B cell (primary cell): ENCODE measurements at regions of chr17 and their contacts with region 1.

Region 1: GRCh38 chr17:8997994-8998628 is 23.2 kb upstream of the NTN1 start:
- DNase-seq: peak; percentile 85
- ATAC-seq: peak; percentile 79
- H3K4me3 ChIP-seq: no peak overlapping the region
- H3K4me3 Mint-ChIP-seq: no peak overlapping the region
- H3K27ac ChIP-seq: no peak overlapping the region
- H3K27ac Mint-ChIP-seq: no peak overlapping the region
- H3K4me1 ChIP-seq: peaks cover 17 to 18% of the 10 kb centered on the region in 2 donors
- H3K4me1 Mint-ChIP-seq: peaks cover 22% of the 10 kb centered on the region
- H3K27me3 ChIP-seq: peaks cover 0 to 17% (median 9%) of the 10 kb centered on the region in 4 experiments
- H3K27me3 Mint-ChIP-seq: peaks cover 15% of the 10 kb centered on the region
- CTCF ChIP-seq: peak; percentile 99

Region 2: DNA sequence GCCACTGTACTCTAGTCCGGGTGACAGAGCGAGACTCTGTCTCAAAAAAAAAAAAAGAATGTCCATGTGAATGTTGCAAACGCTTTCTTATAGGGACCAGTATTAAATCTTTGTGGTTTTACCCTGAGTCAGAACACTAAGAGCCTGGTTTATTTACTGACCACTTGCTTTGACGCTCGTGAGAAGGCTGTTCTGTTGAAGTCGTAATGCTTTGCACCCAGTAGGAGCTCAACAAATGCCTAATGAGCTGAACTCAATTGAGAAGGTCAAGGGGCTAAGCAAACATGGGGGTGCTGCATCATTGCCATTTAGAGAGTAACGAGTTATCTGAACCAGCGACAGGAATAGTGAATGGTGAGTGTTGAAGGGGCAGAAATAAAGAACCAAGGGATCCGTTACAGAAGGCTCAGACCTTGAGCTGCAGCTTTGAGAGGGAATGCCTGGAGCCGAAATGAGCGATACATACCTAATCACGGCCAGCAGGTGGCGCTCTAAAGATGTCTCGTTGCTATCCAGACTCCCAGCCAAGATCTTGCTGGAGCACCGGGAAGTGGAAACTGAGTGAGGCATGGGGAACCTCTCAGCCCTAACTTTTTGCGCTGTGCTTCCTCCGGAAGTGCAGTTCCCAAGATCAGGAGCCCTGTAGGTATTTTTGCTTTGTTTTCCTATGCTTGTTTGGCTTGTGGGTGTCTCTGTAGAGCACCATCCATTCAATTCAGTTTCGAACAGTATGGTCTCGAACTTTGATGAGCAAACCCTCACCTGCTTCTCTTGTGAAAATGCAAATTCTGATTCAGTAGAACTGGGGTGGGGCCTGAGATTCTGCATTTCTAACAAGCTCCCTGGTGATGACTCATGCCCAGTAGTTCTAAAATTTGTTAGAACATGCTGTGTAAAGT is 587.9 kb before region 1 on chr17:
- CTCF ChIA-PET with region 1: interaction called, 19 read pairs
- POLR2A ChIA-PET with region 1: no interaction called
- intact Hi-C with region 1: no loop called
- DNase-seq: peak; percentile 85
- ATAC-seq: peak; percentile 76
- H3K4me3 ChIP-seq: no peak overlapping the region
- H3K4me3 Mint-ChIP-seq: no peak overlapping the region
- H3K27ac ChIP-seq: no peak overlapping the region
- H3K27ac Mint-ChIP-seq: peak overlapping the region; percentile 50
- H3K4me1 ChIP-seq: peaks cover 0 to 5% of the 10 kb centered on the region in 2 donors
- H3K4me1 Mint-ChIP-seq: peaks cover 4% of the 10 kb centered on the region
- H3K27me3 ChIP-seq: peaks cover 0 to 19% (median 4%) of the 10 kb centered on the region in 4 experiments
- H3K27me3 Mint-ChIP-seq: peaks cover 21% of the 10 kb centered on the region
- CTCF ChIP-seq: peak; percentile 95

Region 3: DNA sequence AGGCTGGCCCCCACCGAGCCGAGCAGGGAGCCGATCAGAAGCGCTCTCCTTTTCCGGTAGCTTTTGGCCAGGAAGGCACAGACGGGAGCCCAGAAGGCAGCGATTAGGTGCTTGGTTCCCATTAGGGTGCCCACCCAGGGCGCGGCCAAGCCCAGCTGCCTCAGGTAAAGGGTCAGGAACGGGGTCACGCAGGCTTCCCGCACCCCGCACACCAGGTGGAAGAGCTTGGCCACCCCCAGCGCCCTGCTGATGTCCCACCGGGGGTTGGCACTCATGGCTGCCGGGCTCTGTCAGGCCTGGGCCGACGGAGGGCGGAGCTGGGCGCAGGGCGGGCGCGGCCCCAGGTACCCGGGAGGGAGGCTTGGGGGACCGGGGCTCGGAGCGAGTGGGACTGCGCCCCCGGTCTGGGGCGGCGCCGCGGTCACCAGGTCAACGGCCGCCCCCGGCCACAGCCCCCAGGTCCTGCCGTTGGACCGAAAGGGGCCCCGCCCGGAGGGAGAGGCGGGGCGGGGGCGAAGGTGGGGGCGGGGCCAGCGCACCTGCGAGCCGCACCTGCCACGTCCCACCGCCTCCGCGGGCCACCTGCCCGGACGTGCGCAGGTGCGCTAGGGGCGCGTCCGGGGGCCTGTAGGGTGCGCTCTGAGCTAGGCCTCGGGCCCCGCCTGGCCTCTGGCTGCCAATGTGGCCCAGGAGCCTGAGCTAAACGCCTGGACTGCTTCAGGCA is 199.1 kb before region 1 on chr17 and contains the start of gene MFSD6L:
- CTCF ChIA-PET with region 1: interaction called, 30 read pairs
- POLR2A ChIA-PET with region 1: no interaction called
- intact Hi-C with region 1: loop called (anchors 1 kb)
- DNase-seq: peak; percentile 67
- ATAC-seq: peak; percentile 73
- H3K4me3 ChIP-seq: no peak within 1 kb of the TSS
- H3K4me3 Mint-ChIP-seq: no peak within 1 kb of the TSS
- H3K27ac ChIP-seq: no peak within 1 kb of the TSS
- H3K27ac Mint-ChIP-seq: no peak within 1 kb of the TSS
- H3K4me1 ChIP-seq: peaks cover 0 to 3% of the 10 kb centered on the region in 2 donors
- H3K4me1 Mint-ChIP-seq: peaks cover 12% of the 10 kb centered on the region
- H3K27me3 ChIP-seq: no peaks in the 10 kb centered on the region
- H3K27me3 Mint-ChIP-seq: no peaks in the 10 kb centered on the region
- CTCF ChIP-seq: peak; percentile 40
- total RNA-seq, gene MFSD6L: 0.22 and 0.37 TPM in 2 replicates

Region 4: GRCh38 chr17:8894673-8895578 is 103.2 kb before region 1 on chr17:
- CTCF ChIA-PET with region 1: interaction called, 41 read pairs
- POLR2A ChIA-PET with region 1: no interaction called
- intact Hi-C with region 1: loop called (anchors 2 kb)
- DNase-seq: peak; percentile 71
- ATAC-seq: peak; percentile 51
- H3K4me3 ChIP-seq: no peak overlapping the region
- H3K4me3 Mint-ChIP-seq: no peak overlapping the region
- H3K27ac ChIP-seq: no peak overlapping the region
- H3K27ac Mint-ChIP-seq: no peak overlapping the region
- H3K4me1 ChIP-seq: peaks cover 23 to 38% of the 10 kb centered on the region in 2 donors
- H3K4me1 Mint-ChIP-seq: peaks cover 42% of the 10 kb centered on the region
- H3K27me3 ChIP-seq: no peaks in the 10 kb centered on the region
- H3K27me3 Mint-ChIP-seq: no peaks in the 10 kb centered on the region
- CTCF ChIP-seq: peak; percentile 80

Region 5: GRCh38 chr17:8965394-8966168 is 32.5 kb before region 1 on chr17 and contains the start of gene PIK3R5:
- CTCF ChIA-PET with region 1: interaction called, 9 read pairs
- POLR2A ChIA-PET with region 1: interaction called, 3 read pairs
- intact Hi-C with region 1: loop called (anchors 1 kb)
- DNase-seq: peak; percentile 98
- ATAC-seq: peak; percentile 90
- H3K4me3 ChIP-seq: peak within 1 kb of the TSS; percentile 59 to 93 (median 84)
- H3K4me3 Mint-ChIP-seq: peak within 1 kb of the TSS; percentile 95
- H3K27ac ChIP-seq: peak within 1 kb of the TSS; percentile 93 to 97
- H3K27ac Mint-ChIP-seq: peak within 1 kb of the TSS; percentile 94
- H3K4me1 ChIP-seq: peaks cover 43 to 56% of the 10 kb centered on the region in 2 donors
- H3K4me1 Mint-ChIP-seq: peaks cover 54% of the 10 kb centered on the region
- H3K27me3 ChIP-seq: no peaks in the 10 kb centered on the region
- H3K27me3 Mint-ChIP-seq: no peaks in the 10 kb centered on the region
- CTCF ChIP-seq: peak; percentile 28
- total RNA-seq, gene PIK3R5: 69.9 and 70.0 TPM in 2 replicates

Region 6: DNA sequence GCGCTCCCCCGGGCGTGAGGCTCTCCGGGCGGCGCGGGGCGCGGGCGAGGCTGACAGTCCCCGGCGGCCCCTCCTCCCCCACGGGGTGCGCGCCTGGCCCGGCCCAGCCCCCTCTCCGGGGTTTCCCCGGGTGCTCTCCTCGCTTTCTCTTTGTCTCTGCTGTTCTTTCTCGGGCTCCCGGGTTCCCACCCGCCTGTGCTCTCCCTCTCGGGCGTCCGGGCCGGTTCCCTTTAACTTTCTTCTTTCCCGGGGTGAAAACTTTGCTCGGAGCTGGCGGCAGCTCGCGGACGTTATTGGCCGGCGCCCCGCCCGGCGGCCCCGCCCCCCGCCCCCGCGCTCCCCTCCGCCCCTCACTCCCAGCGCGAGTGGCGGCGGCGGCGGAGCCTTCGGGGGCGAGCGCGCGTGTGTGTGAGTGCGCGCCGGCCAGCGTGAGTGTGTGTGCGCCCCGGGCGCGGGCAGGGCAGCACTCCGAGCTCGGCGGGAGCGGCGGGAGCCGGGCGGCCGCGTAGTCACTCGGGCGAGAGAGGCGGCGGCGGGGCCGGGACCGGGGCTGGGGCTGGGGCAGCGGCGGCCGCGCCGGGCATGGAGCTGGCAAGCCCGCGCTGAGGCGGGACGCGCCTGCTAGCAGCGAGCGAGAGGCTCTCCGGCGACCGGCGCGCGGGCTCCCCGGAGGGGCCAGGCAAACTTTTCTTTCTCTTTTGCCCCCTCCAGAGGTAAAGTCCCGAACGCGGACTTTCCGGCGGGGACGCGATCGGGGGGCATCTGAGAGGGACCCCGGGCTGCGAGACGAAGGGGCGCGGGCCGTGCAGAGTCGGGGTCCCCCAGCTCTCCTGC is 23.3 kb after region 1 on chr17 and contains the start of gene NTN1:
- CTCF ChIA-PET with region 1: interaction called, 5 read pairs
- POLR2A ChIA-PET with region 1: interaction called, 3 read pairs
- intact Hi-C with region 1: loop called (anchors 2 kb)
- DNase-seq: peak; percentile 83
- ATAC-seq: peak; percentile 82
- H3K4me3 ChIP-seq: peak within 1 kb of the TSS; percentile 35 to 69 (median 63)
- H3K4me3 Mint-ChIP-seq: peak within 1 kb of the TSS; percentile 87
- H3K27ac ChIP-seq: no peak within 1 kb of the TSS
- H3K27ac Mint-ChIP-seq: peak within 1 kb of the TSS; percentile 50
- H3K4me1 ChIP-seq: peaks cover 26 to 27% of the 10 kb centered on the region in 2 donors
- H3K4me1 Mint-ChIP-seq: peaks cover 26% of the 10 kb centered on the region
- H3K27me3 ChIP-seq: peaks cover 1 to 53% (median 36%) of the 10 kb centered on the region in 4 experiments
- H3K27me3 Mint-ChIP-seq: peaks cover 28% of the 10 kb centered on the region
- CTCF ChIP-seq: no peak
- total RNA-seq, gene NTN1: 0.19 and 0.25 TPM in 2 replicates